Activated CD4-positive, alpha-beta T cell treated with anti-CD3 and anti-CD28 coated beads for 36 hours (primary cell): ENCODE measurements at regions of chr1 and their contacts with region 1.

Region 1: GRCh38 chr1:52726265-52727113 is at the start of gene ZYG11B:
- DNase-seq: peak; percentile 96
- ATAC-seq: peak; percentile 91
- H3K4me3 Mint-ChIP-seq: peak within 1 kb of the TSS; percentile 93
- H3K27ac Mint-ChIP-seq: peak within 1 kb of the TSS; percentile 85
- H3K4me1 Mint-ChIP-seq: peaks cover 32% of the 10 kb centered on the region
- H3K27me3 Mint-ChIP-seq: no peaks in the 10 kb centered on the region
- total RNA-seq, gene ZYG11B: 12.9 to 14.3 TPM

Region 2: GRCh38 chr1:52697795-52698674 is 28.5 kb before region 1 on chr1 and contains the start of gene COA7:
- CTCF ChIA-PET with region 1: no interaction called
- POLR2A ChIA-PET with region 1: no interaction called
- intact Hi-C with region 1: loop called (anchors 1 kb)
- DNase-seq: peak; percentile 83
- ATAC-seq: peak; percentile 50
- H3K4me3 Mint-ChIP-seq: peak within 1 kb of the TSS; percentile 93
- H3K27ac Mint-ChIP-seq: peak within 1 kb of the TSS; percentile 89
- H3K4me1 Mint-ChIP-seq: peaks cover 23% of the 10 kb centered on the region
- H3K27me3 Mint-ChIP-seq: no peaks in the 10 kb centered on the region
- total RNA-seq, gene COA7: 11.0 to 17.2 TPM

Region 3: DNA sequence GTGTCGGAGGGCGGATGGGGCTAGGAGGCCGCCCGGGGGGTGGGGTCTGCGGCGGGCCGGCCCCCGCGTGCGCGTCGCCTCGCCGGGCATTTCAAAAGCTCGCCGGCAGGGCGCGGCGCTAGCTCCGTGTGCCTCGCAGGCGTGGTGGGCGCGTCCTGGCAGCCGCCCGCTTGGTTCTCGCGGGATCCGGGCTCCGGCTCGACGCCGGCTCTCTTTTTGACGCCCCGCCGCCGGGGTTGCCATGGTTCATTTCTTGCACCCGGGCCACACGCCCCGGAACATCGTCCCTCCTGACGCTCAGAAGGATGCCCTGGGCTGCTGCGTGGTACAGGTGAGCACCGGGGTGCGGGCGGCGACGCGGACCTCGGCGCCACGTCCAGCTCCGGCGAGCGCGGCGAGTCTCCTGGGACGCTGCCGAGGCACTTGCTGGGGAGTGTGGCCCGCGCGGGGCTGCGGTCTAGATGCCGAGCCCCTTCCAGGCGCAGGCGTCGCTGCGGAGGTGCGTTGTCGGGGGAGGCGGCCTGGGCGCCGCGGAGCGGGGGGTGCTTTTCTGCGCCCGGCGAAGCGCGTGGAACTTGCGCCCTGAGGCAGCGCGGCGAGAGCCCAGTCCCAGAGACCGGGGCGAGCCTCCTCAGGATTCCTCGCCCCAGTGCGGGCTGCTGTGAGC is 116.3 kb after region 1 on chr1 and contains the start of gene ZYG11A:
- CTCF ChIA-PET with region 1: no interaction called
- POLR2A ChIA-PET with region 1: no interaction called
- intact Hi-C with region 1: loop called in 1 of 2 experiments (anchors 1 kb)
- DNase-seq: peak; percentile 89
- ATAC-seq: peak; percentile 98
- H3K4me3 Mint-ChIP-seq: peak within 1 kb of the TSS; percentile 58
- H3K27ac Mint-ChIP-seq: no peak within 1 kb of the TSS
- H3K4me1 Mint-ChIP-seq: peaks cover 5% of the 10 kb centered on the region
- H3K27me3 Mint-ChIP-seq: peaks cover 18% of the 10 kb centered on the region
- total RNA-seq, gene ZYG11A: 0.11 to 0.25 TPM

Region 4: DNA sequence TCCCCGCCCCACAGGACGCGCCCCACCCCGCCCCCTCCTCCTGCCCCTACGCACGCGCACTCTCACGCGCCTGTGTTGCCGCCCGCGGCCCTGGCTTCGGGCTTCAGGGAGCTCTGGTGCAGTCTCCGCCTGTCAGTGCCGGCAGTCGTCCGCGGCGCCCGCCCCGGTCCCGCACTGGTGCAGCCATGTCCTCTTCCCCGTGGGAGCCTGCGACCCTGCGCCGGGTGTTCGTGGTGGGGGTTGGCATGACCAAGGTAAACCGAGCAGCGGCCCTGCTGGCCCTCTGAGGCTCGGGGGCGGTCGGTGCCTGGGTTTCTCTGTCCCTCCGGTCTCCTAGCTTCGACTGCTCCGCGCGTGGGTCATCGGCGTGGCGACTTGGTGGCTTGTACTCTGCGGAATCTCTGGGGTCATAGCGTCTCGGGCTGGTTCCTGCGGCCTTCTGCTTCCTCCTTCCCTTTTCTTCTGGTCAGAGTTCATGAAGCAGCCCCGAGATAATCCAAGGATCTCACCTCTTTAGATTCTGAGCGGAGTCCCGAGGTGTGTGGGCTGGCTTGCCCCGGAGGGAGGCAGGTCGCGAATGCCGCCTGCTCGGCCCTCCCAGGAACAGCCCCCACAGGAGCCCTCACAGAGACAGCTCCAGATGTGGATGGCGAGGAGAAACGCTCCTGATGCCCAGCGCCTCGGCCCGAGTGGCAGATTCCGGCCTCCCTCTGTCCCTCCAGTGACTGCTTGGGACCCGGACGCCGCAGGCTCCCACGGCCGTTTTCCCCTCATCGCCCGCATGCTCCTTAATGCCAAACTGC is 200.9 kb after region 1 on chr1 and contains the start of gene SCP2:
- CTCF ChIA-PET with region 1: no interaction called
- POLR2A ChIA-PET with region 1: no interaction called
- intact Hi-C with region 1: loop called in 1 of 2 experiments (anchors 10 kb)
- DNase-seq: peak; percentile 90
- ATAC-seq: peak; percentile 94
- H3K4me3 Mint-ChIP-seq: peak within 1 kb of the TSS; percentile 78
- H3K27ac Mint-ChIP-seq: peak within 1 kb of the TSS; percentile 68
- H3K4me1 Mint-ChIP-seq: peaks cover 14% of the 10 kb centered on the region
- H3K27me3 Mint-ChIP-seq: no peaks in the 10 kb centered on the region
- total RNA-seq, gene SCP2: 46.6 to 67.1 TPM

Region 5: GRCh38 chr1:53014791-53015507 is 288.5 kb after region 1 on chr1:
- CTCF ChIA-PET with region 1: no interaction called
- POLR2A ChIA-PET with region 1: no interaction called
- intact Hi-C with region 1: loop called in 1 of 2 experiments (anchors 1 kb)
- DNase-seq: peak; percentile 84
- ATAC-seq: peak; percentile 99
- H3K4me3 Mint-ChIP-seq: peak overlapping the region; percentile 79
- H3K27ac Mint-ChIP-seq: peak overlapping the region; percentile 89
- H3K4me1 Mint-ChIP-seq: peaks cover 24% of the 10 kb centered on the region
- H3K27me3 Mint-ChIP-seq: no peaks in the 10 kb centered on the region

Region 6: GRCh38 chr1:53238197-53239155 is 512.0 kb after region 1 on chr1 and contains the start of gene MAGOH:
- CTCF ChIA-PET with region 1: no interaction called
- POLR2A ChIA-PET with region 1: no interaction called
- intact Hi-C with region 1: loop called in 1 of 2 experiments (anchors 1 kb)
- DNase-seq: peak; percentile 95
- ATAC-seq: peak; percentile 98
- H3K4me3 Mint-ChIP-seq: peak within 1 kb of the TSS; percentile 96
- H3K27ac Mint-ChIP-seq: peak within 1 kb of the TSS; percentile 93
- H3K4me1 Mint-ChIP-seq: peaks cover 24% of the 10 kb centered on the region
- H3K27me3 Mint-ChIP-seq: no peaks in the 10 kb centered on the region
- total RNA-seq, gene MAGOH: 73.7 to 92.3 TPM